ENCODE measurements at regions of chr5 and their contacts with region 1.

Region 1: GRCh38 chr5:135110785-135111596 is 77.0 kb upstream of the PITX1 start:
- DNase-seq: no peak
- ATAC-seq: no peak
- H3K4me3 ChIP-seq: no peak overlapping the region
- H3K27ac ChIP-seq: no peak overlapping the region
- H3K4me1 ChIP-seq: no peaks in the 10 kb centered on the region
- H3K27me3 ChIP-seq: no peaks in the 10 kb centered on the region
- CTCF ChIP-seq: no peak

Region 2: GRCh38 chr5:135069895-135070657 is 40.9 kb before region 1 on chr5:
- CTCF ChIA-PET with region 1: interaction called, 10 read pairs
- POLR2A ChIA-PET with region 1: no interaction called
- in situ Hi-C with region 1: no loop called
- intact Hi-C with region 1: no loop called
- DNase-seq: no peak
- ATAC-seq: no peak
- H3K4me3 ChIP-seq: no peak overlapping the region
- H3K27ac ChIP-seq: no peak overlapping the region
- H3K4me1 ChIP-seq: no peaks in the 10 kb centered on the region; the same call in none of the 2 replicates
- H3K27me3 ChIP-seq: no peaks in the 10 kb centered on the region
- CTCF ChIP-seq: no peak